T-cell (primary cell): ENCODE measurements at regions of chr17 and their contacts with region 1.

Region 1: GRCh38 chr17:30104575-30105339 is 11.9 kb upstream of the NSRP1 start:
- DNase-seq: peak; percentile 22 to 85 (median 51)
- ATAC-seq: peak; percentile 95 to 97 (median 96)
- H3K4me3 ChIP-seq: peak overlapping the region; percentile 44 to 58
- H3K4me3 Mint-ChIP-seq: peak overlapping the region; percentile 74 to 79 (median 75)
- H3K27ac ChIP-seq: no peak overlapping the region
- H3K27ac Mint-ChIP-seq: peak overlapping the region in 1 of 2 donors; percentile 40
- H3K4me1 ChIP-seq: peaks cover 2 to 4% of the 10 kb centered on the region in 2 experiments
- H3K4me1 Mint-ChIP-seq: peaks cover 5 to 6% (median 5%) of the 10 kb centered on the region in 3 donors
- H3K27me3 ChIP-seq: peaks cover 0 to 7% of the 10 kb centered on the region in 2 experiments
- H3K27me3 Mint-ChIP-seq: peaks cover 0 to 6% of the 10 kb centered on the region in 2 donors

Region 2: DNA sequence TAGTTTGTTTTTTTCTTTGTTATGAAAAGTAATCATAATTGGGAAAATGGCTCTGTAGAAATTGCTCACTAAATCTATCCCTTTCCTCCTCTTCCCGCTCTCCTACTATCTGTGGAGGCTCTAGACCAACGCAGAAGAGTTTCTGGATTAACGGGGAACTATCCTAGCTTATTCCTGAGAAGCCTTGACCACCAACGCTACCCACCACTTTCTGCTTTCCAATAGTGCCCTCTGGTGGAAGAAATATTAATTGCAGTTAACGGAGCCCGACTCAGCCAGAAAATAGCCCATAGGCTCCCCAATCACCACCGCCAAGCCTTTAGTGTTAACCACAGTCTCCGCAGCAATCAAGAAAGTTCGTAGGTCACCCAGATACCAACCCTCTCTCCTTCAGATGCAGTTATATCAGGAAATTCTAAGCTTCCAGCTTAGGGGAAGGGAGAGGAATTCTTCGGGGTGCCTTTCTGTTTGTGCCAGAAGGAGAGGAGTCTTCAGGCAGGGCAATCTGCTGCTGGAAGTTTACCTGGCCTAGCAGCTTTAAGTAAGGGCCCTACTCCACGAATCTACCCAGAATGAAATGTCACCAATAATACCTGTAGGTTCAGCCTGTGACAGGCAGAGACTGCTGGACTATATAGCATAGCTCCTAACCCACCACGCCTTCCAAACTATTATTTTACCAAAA is 11.2 kb before region 1 on chr17:
- CTCF ChIA-PET with region 1: interaction called, 10 to 28 read pairs
- POLR2A ChIA-PET with region 1: no interaction called
- DNase-seq: peak in 23 of 35 experiments; percentile 5 to 74 (median 18)
- ATAC-seq: peak in 3 of 4 experiments; percentile 56 to 63 (median 62)
- H3K4me3 ChIP-seq: no peak overlapping the region
- H3K4me3 Mint-ChIP-seq: no peak overlapping the region
- H3K27ac ChIP-seq: no peak overlapping the region
- H3K27ac Mint-ChIP-seq: no peak overlapping the region
- H3K4me1 ChIP-seq: peaks cover 0 to 4% of the 10 kb centered on the region in 2 experiments
- H3K4me1 Mint-ChIP-seq: peaks cover 6 to 7% (median 7%) of the 10 kb centered on the region in 3 donors
- H3K27me3 ChIP-seq: peaks cover 0 to 13% of the 10 kb centered on the region in 2 experiments
- H3K27me3 Mint-ChIP-seq: peaks cover 9 to 22% of the 10 kb centered on the region in 2 donors

Region 3: GRCh38 chr17:30116661-30117551 is 12.1 kb after region 1 on chr17 and contains the start of gene NSRP1:
- CTCF ChIA-PET with region 1: interaction called in 1 of 2 experiments, 20 read pairs
- POLR2A ChIA-PET with region 1: no interaction called
- DNase-seq: peak; percentile 85 to 96 (median 90)
- ATAC-seq: peak; percentile 98 to 100 (median 99)
- H3K4me3 ChIP-seq: peak within 1 kb of the TSS; percentile 97 to 99
- H3K4me3 Mint-ChIP-seq: peak within 1 kb of the TSS; percentile 94 to 98 (median 95)
- H3K27ac ChIP-seq: peak within 1 kb of the TSS; percentile 99
- H3K27ac Mint-ChIP-seq: peak within 1 kb of the TSS; percentile 96 to 98
- H3K4me1 ChIP-seq: peaks cover 13 to 21% of the 10 kb centered on the region in 2 experiments
- H3K4me1 Mint-ChIP-seq: peaks cover 34 to 48% (median 47%) of the 10 kb centered on the region in 3 donors
- H3K27me3 ChIP-seq: no peaks in the 10 kb centered on the region
- H3K27me3 Mint-ChIP-seq: no peaks in the 10 kb centered on the region
- total RNA-seq, gene NSRP1: 24.6 to 31.9 (median 28.5) TPM

Region 4: DNA sequence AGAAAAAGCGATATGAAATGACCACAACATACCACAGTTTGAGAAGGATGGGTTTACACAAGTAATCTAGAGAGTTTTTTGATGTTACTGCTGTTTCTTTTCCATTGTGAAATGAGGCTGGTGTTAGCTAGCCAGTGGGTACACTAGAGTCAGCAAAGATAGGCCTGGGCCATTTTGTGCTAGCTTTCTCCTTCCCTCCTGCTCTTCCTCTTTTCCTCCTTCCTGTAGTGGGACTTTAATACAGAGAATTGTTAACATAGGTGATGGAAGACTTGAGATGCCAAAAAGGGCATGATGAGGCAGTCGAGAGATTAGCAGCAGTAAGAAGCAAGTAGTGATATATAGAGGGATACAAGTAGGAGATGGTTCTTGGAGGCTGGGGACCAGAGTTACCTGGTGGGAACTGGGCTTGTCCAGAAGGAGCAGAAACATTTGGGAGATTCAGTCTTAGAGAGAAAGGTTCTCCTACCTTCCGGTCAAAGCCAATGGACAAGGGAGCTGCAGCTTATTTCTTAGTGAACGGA is 19.6 kb after region 1 on chr17:
- CTCF ChIA-PET with region 1: interaction called, 8 to 54 read pairs
- POLR2A ChIA-PET with region 1: no interaction called
- DNase-seq: no peak
- ATAC-seq: no peak
- H3K4me3 ChIP-seq: no peak overlapping the region
- H3K4me3 Mint-ChIP-seq: no peak overlapping the region
- H3K27ac ChIP-seq: no peak overlapping the region
- H3K27ac Mint-ChIP-seq: no peak overlapping the region
- H3K4me1 ChIP-seq: peaks cover 2 to 12% of the 10 kb centered on the region in 2 experiments
- H3K4me1 Mint-ChIP-seq: peaks cover 34 to 46% (median 44%) of the 10 kb centered on the region in 3 donors
- H3K27me3 ChIP-seq: no peaks in the 10 kb centered on the region
- H3K27me3 Mint-ChIP-seq: no peaks in the 10 kb centered on the region

Region 5: DNA sequence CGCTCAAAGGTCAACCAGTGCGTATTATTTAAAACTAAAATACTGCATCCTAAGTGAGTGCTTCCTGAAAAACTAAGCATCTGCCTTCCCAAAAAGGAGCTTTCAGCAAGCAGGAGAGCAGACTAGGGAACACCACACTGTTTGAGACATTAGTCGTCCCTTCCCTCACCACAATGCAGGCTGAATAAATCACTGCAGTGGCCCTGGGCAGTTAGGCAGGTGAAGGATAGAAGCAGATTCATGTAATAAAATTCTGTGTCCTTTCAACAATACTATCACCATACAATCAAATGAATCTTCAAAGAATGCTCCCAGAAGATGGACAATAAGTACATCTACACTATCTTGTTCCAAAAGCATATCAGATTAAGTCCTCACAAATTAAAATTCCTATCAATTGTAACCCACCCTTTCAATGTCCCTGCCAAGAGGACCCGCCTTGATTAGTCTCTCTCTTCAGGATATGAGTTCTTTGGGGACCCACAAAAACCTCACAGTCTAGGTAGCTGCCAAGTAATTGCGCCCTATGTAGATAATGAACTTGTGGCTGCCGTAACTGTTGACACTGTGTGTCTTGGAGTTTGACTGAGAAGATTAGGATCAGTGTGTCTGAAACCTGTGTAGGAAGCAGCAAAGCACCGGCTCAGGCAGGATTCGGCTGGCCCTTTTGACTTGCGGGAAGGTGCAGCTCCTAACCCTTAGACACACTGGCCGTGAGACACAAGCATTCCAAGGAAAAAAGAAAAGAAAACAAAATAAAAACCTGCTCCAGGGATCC is 148.4 kb after region 1 on chr17:
- CTCF ChIA-PET with region 1: interaction called in 1 of 2 experiments, 10 read pairs
- POLR2A ChIA-PET with region 1: no interaction called
- DNase-seq: no peak
- ATAC-seq: no peak
- H3K4me3 ChIP-seq: no peak overlapping the region
- H3K4me3 Mint-ChIP-seq: no peak overlapping the region
- H3K27ac ChIP-seq: no peak overlapping the region
- H3K27ac Mint-ChIP-seq: no peak overlapping the region
- H3K4me1 ChIP-seq: no peaks in the 10 kb centered on the region
- H3K4me1 Mint-ChIP-seq: no peaks in the 10 kb centered on the region
- H3K27me3 ChIP-seq: no peaks in the 10 kb centered on the region
- H3K27me3 Mint-ChIP-seq: no peaks in the 10 kb centered on the region

Region 6: DNA sequence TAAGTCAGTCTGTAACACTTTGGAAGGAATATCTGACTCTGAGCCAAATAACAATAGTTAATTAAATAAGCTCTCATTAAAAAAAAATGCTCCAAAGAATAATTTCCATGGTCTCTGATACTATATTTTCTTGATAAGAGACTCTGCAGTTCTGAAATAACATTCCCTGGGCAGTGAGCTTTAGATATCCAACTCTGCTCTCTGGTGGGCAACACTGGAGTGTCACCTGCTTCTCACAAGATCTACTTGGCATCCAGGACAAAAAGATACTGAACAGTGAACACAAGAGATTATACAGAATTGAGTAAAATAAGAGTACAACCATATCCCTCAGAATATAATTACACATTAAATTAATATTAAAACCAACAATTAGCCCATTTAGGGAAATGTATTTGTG is 173.3 kb after region 1 on chr17:
- CTCF ChIA-PET with region 1: interaction called, 3 to 10 read pairs
- POLR2A ChIA-PET with region 1: no interaction called
- DNase-seq: peak in 5 of 35 experiments; percentile 3 to 32 (median 9)
- ATAC-seq: peak in 1 of 4 experiments; percentile 35
- H3K4me3 ChIP-seq: no peak overlapping the region
- H3K4me3 Mint-ChIP-seq: no peak overlapping the region
- H3K27ac ChIP-seq: no peak overlapping the region
- H3K27ac Mint-ChIP-seq: no peak overlapping the region
- H3K4me1 ChIP-seq: no peaks in the 10 kb centered on the region
- H3K4me1 Mint-ChIP-seq: no peaks in the 10 kb centered on the region
- H3K27me3 ChIP-seq: no peaks in the 10 kb centered on the region
- H3K27me3 Mint-ChIP-seq: no peaks in the 10 kb centered on the region

Region 7: DNA sequence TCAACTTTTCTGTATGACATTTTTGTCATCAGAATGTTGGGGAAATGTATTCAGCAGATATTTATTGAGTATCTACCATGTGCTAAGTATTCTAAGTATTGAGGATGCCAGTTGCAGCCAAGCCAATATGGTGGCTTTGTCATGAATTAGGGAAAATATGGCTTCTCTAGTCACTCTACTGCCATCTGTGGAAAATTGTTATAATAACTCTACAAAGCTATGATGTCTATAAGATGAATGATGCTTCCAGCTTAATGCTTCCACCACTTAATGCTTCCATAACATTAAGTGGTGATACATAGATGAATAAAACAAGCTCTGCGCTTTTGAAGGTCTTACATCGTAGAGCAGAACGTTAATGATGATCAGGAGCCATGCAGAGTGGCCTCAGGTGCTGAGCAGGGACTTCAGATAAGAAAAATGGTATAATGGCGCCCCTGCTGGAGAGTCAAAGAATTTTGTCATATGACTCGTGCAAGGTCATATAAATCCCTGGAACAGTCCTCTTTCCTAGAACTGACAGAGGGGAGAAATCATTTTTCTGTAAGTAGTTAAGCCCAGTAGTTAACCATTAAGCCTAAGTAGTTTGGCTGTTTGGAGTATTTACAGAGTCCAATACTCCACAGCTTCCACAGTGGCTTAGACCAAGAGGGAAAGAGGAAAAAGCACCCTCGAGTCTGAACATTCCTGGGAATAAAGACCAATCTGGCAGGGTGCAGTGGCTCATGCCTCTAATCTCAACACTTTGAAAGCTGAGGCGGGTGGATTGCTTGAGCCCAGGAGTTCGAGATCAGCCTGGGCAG is 231.8 kb after region 1 on chr17:
- CTCF ChIA-PET with region 1: interaction called, 3 to 31 read pairs
- POLR2A ChIA-PET with region 1: no interaction called
- DNase-seq: peak in 33 of 35 experiments; percentile 15 to 83 (median 46)
- ATAC-seq: peak; percentile 32 to 52 (median 43)
- H3K4me3 ChIP-seq: no peak overlapping the region
- H3K4me3 Mint-ChIP-seq: no peak overlapping the region
- H3K27ac ChIP-seq: no peak overlapping the region
- H3K27ac Mint-ChIP-seq: no peak overlapping the region
- H3K4me1 ChIP-seq: peaks cover 12 to 18% of the 10 kb centered on the region in 2 experiments
- H3K4me1 Mint-ChIP-seq: peaks cover 38 to 47% (median 44%) of the 10 kb centered on the region in 3 donors
- H3K27me3 ChIP-seq: no peaks in the 10 kb centered on the region
- H3K27me3 Mint-ChIP-seq: no peaks in the 10 kb centered on the region